ENCODE measurements at regions of chr16 and their contacts with region 1.

Region 1: DNA sequence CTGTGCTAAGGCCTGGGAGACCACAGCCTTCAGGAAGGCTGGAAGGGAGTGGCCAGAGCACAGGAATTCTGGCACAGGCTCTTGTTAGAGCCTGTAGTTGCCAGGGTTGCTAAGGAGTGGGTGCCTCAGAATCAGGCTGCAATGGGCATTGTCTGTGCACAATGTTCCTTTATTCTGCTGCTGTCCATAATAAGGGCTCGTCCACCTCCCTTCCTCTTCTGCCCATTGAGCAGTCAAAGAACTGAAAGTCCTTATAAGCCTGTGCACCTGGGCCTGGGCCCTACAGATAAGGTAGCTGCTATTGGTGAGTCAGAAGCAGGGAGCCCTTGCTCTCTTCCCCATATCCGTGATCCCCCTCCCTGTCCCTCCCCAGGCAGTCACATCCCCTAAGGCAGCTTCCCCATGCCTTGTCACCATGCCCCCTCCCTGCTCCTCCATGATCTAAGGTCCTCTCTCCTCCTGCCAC is 5.4 kb upstream of the CNGB1 start:
- DNase-seq: no peak
- ATAC-seq: no peak
- H3K4me3 ChIP-seq: no peak overlapping the region
- H3K4me3 Mint-ChIP-seq: no peak overlapping the region
- H3K27ac ChIP-seq: no peak overlapping the region
- H3K27ac Mint-ChIP-seq: no peak overlapping the region
- H3K4me1 ChIP-seq: no peaks in the 10 kb centered on the region
- H3K4me1 Mint-ChIP-seq: no peaks in the 10 kb centered on the region
- H3K27me3 ChIP-seq: peaks cover 0 to 8% of the 10 kb centered on the region in 2 experiments
- H3K27me3 Mint-ChIP-seq: no peaks in the 10 kb centered on the region

Region 2: GRCh38 chr16:58306327-58306726 is 330.0 kb after region 1 on chr16:
- CTCF ChIA-PET with region 1: interaction called in 1 of 2 experiments, 10 read pairs
- POLR2A ChIA-PET with region 1: no interaction called
- DNase-seq: peak in 32 of 35 experiments; percentile 4 to 64 (median 41)
- ATAC-seq: no peak
- H3K4me3 ChIP-seq: no peak overlapping the region
- H3K4me3 Mint-ChIP-seq: no peak overlapping the region
- H3K27ac ChIP-seq: no peak overlapping the region
- H3K27ac Mint-ChIP-seq: no peak overlapping the region
- H3K4me1 ChIP-seq: no peaks in the 10 kb centered on the region
- H3K4me1 Mint-ChIP-seq: no peaks in the 10 kb centered on the region
- H3K27me3 ChIP-seq: no peaks in the 10 kb centered on the region
- H3K27me3 Mint-ChIP-seq: peaks cover 5 to 12% of the 10 kb centered on the region in 2 donors